Activated CD4-positive, alpha-beta memory T cell treated with anti-CD3 and anti-CD28 coated beads for 36 hours (primary cell): ENCODE measurements at regions of chr15 and their contacts with region 1.

Region 1: GRCh38 chr15:38665586-38666305 is 101.1 kb upstream of the RASGRP1 start:
- DNase-seq: no peak
- H3K4me3 Mint-ChIP-seq: peak overlapping the region; percentile 6
- H3K27ac Mint-ChIP-seq: peak overlapping the region; percentile 80
- H3K4me1 Mint-ChIP-seq: peaks cover 89% of the 10 kb centered on the region
- H3K27me3 Mint-ChIP-seq: no peaks in the 10 kb centered on the region

Region 2: DNA sequence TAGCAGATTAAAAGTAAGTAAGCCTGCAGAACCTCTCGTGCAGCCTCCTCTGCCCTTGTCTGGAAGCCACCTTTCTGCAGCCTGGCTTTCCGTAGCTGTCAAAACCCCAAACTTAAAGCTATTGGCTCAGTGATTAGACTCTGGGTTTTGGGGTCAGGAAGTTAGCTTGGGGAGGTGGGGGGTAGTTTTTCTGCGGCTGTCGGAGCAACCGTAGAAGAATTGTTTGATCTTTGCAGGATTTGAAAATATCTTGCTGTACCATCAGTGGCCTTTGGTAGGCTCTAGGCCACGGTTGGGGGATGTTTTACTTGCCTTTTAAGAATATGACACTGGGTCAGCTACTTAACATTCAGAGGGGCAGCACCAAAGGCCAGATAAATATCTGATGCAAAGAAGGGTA is 12.7 kb before region 1 on chr15:
- CTCF ChIA-PET with region 1: interaction called, 13 read pairs
- POLR2A ChIA-PET with region 1: interaction called, 6 read pairs
- intact Hi-C with region 1: loop called (anchors 1 kb)
- DNase-seq: peak; percentile 83
- H3K4me3 Mint-ChIP-seq: peak overlapping the region; percentile 77
- H3K27ac Mint-ChIP-seq: peak overlapping the region; percentile 93
- H3K4me1 Mint-ChIP-seq: peaks cover 77% of the 10 kb centered on the region
- H3K27me3 Mint-ChIP-seq: no peaks in the 10 kb centered on the region